ENCODE measurements at regions of chr14 and their contacts with region 1.

Region 1: DNA sequence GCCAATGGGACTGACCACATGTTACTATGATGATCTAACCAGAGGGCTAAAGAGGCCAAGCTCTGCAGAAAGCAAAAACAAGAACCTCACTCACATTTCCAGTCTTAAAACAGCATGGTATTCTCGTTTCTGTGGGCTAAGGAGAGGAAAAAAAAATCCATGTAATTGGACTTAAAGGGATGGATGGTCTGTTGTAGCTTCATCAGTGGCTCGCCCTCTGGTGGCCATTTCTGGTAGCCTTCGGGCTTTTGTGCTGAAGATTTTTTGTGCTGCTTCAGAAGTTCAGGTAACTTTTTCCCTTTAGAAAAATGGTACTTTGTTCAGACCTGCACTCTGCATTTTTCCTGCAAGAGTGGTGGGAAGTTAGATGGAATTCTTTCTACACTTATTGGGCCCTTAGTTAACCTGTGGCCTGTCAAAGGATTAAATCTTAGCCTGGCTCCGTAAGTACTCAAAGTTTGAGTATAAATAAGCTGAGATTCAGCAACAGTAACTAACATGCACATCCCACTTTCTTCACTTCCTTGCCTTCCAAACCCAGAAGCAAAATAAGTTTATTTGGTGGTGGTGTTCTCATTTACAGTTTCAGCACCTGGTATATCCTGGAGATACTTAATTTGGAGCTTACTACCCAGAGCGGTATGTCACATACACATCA is 22.3 kb downstream of the DCAF4 start:
- DNase-seq: peak; percentile 11
- ATAC-seq: peak; percentile 85
- H3K4me3 ChIP-seq: no peak overlapping the region
- H3K27ac ChIP-seq: no peak overlapping the region
- H3K4me1 ChIP-seq: no peaks in the 10 kb centered on the region
- H3K27me3 ChIP-seq: no peaks in the 10 kb centered on the region
- CTCF ChIP-seq: peak; percentile 77 to 89 (median 83)
- EP300 ChIP-seq: no peak
- POLR2A ChIP-seq: no peak
- RAD21 ChIP-seq: peak; percentile 55

Region 2: GRCh38 chr14:72476657-72477499 is 471.7 kb before region 1 on chr14:
- CTCF ChIA-PET with region 1: interaction called, 15 read pairs
- POLR2A ChIA-PET with region 1: no interaction called
- RAD21 ChIA-PET with region 1: no interaction called
- SMC1A ChIA-PET with region 1: no interaction called
- in situ Hi-C with region 1: no loop called
- intact Hi-C with region 1: no loop called
- DNase-seq: peak; percentile 100
- ATAC-seq: peak; percentile 86
- H3K4me3 ChIP-seq: 0 out of 2 replicates have a peak overlapping the region, but pooled peaks have one; percentile 24
- H3K27ac ChIP-seq: peak overlapping the region; percentile 93
- H3K4me1 ChIP-seq: peaks cover 56% of the 10 kb centered on the region
- H3K27me3 ChIP-seq: no peaks in the 10 kb centered on the region
- CTCF ChIP-seq: no peak
- EP300 ChIP-seq: peak; percentile 97
- POLR2A ChIP-seq: 0 out of 2 replicates have a peak, but pooled peaks have one; percentile 41
- RAD21 ChIP-seq: peak; percentile 32

Region 3: GRCh38 chr14:72810201-72810600 is 138.4 kb before region 1 on chr14:
- CTCF ChIA-PET with region 1: no interaction called
- POLR2A ChIA-PET with region 1: no interaction called
- RAD21 ChIA-PET with region 1: no interaction called
- SMC1A ChIA-PET with region 1: no interaction called
- in situ Hi-C with region 1: no loop called
- intact Hi-C with region 1: no loop called
- DNase-seq: no peak
- ATAC-seq: no peak; the same call in 2 of the 3 replicates
- H3K4me3 ChIP-seq: no peak overlapping the region
- H3K27ac ChIP-seq: no peak overlapping the region
- H3K4me1 ChIP-seq: no peaks in the 10 kb centered on the region; the same call in 1 of the 2 replicates
- H3K27me3 ChIP-seq: no peaks in the 10 kb centered on the region
- CTCF ChIP-seq: no peak
- EP300 ChIP-seq: no peak
- POLR2A ChIP-seq: no peak
- RAD21 ChIP-seq: no peak

Region 4: GRCh38 chr14:72904840-72905561 is 43.6 kb before region 1 on chr14:
- CTCF ChIA-PET with region 1: interaction called, 30 read pairs
- POLR2A ChIA-PET with region 1: no interaction called
- RAD21 ChIA-PET with region 1: interaction called, 10 read pairs
- SMC1A ChIA-PET with region 1: interaction called, 11 read pairs
- in situ Hi-C with region 1: no loop called
- intact Hi-C with region 1: no loop called
- DNase-seq: no peak
- ATAC-seq: peak; percentile 83
- H3K4me3 ChIP-seq: no peak overlapping the region
- H3K27ac ChIP-seq: no peak overlapping the region
- H3K4me1 ChIP-seq: peaks cover 7% of the 10 kb centered on the region; the same call in 1 of the 2 replicates
- H3K27me3 ChIP-seq: no peaks in the 10 kb centered on the region
- CTCF ChIP-seq: peak; percentile 88 to 96 (median 95)
- EP300 ChIP-seq: no peak
- POLR2A ChIP-seq: no peak
- RAD21 ChIP-seq: peak; percentile 99

Region 5: DNA sequence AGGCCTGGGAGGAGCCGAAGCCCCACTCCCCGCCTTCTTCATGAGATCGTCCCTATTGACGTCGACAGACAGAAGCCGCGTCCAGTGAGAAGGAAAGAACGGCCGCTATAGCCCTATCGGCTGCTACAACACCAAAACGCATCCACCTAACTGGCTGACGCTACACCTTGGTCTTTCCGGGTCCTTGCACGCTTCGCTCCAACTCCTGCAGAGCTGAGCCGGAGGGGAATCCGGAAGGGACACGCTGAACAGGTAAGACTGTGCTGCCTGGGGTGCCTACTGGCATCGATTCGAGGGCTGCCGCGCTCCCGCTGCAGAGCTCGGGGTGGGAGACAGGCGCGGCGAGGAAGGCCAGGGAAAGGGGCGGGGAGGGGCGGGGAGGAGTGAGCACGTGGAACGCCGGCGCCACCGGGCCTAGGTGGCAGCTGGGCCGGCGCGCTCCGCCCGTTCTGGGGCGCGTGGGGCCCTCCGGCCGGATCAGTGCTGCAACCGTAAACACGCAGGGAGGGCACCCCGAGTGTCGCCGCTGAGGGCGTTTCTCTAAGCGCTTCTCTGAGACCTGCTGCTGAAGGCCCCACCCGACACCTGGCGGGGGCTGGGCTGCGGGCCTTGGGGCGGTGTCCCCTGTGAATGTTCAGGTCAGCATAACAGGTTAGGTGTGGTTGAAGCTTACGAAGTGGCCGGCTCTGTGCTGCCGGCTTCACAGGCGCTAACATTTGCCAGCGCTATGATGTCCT is 22.1 kb before region 1 on chr14 and contains the start of gene DCAF4:
- CTCF ChIA-PET with region 1: interaction called, 11 read pairs
- POLR2A ChIA-PET with region 1: no interaction called
- RAD21 ChIA-PET with region 1: no interaction called
- SMC1A ChIA-PET with region 1: interaction called, 9 read pairs
- in situ Hi-C with region 1: no loop called
- intact Hi-C with region 1: no loop called
- DNase-seq: peak; percentile 94
- ATAC-seq: peak; percentile 95
- H3K4me3 ChIP-seq: peak within 1 kb of the TSS; percentile 94
- H3K27ac ChIP-seq: peak within 1 kb of the TSS; percentile 63
- H3K4me1 ChIP-seq: no peaks in the 10 kb centered on the region; the same call in 1 of the 2 replicates
- H3K27me3 ChIP-seq: no peaks in the 10 kb centered on the region
- CTCF ChIP-seq: no peak
- EP300 ChIP-seq: no peak
- POLR2A ChIP-seq: peak; percentile 73
- RAD21 ChIP-seq: no peak
- polyA plus RNA-seq, gene DCAF4: 2.6 to 3.1 TPM

Region 6: DNA sequence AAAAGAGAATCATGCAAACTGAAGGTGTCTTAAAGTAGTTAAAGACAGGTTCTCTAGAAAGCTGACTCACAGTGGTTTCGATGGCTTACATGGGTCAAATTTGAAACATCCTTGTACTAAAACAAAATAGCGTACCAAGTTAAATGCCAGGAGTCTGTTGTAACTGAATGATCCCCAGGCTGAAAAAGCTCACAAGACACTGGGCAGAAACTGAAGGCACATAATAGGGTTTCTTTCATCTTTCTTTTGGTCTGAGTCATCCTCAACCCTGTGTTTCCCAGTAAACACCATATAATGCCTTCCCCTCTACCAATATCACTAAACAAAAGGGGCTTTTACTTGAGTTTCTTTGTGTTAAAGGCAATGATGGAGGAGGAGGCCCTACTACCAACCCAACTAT is 65.5 kb after region 1 on chr14:
- CTCF ChIA-PET with region 1: interaction called, 7 read pairs
- POLR2A ChIA-PET with region 1: no interaction called
- RAD21 ChIA-PET with region 1: no interaction called
- SMC1A ChIA-PET with region 1: interaction called, 11 read pairs
- in situ Hi-C with region 1: no loop called
- intact Hi-C with region 1: no loop called
- DNase-seq: peak; percentile 90
- ATAC-seq: peak; percentile 97
- H3K4me3 ChIP-seq: 0 out of 2 replicates have a peak overlapping the region, but pooled peaks have one; percentile 14
- H3K27ac ChIP-seq: peak overlapping the region; percentile 93
- H3K4me1 ChIP-seq: peaks cover 12% of the 10 kb centered on the region
- H3K27me3 ChIP-seq: no peaks in the 10 kb centered on the region
- CTCF ChIP-seq: no peak
- EP300 ChIP-seq: peak; percentile 68 to 79
- POLR2A ChIP-seq: no peak
- RAD21 ChIP-seq: no peak